ENCODE measurements at regions of chr2 and their contacts with region 1.

Region 1: DNA sequence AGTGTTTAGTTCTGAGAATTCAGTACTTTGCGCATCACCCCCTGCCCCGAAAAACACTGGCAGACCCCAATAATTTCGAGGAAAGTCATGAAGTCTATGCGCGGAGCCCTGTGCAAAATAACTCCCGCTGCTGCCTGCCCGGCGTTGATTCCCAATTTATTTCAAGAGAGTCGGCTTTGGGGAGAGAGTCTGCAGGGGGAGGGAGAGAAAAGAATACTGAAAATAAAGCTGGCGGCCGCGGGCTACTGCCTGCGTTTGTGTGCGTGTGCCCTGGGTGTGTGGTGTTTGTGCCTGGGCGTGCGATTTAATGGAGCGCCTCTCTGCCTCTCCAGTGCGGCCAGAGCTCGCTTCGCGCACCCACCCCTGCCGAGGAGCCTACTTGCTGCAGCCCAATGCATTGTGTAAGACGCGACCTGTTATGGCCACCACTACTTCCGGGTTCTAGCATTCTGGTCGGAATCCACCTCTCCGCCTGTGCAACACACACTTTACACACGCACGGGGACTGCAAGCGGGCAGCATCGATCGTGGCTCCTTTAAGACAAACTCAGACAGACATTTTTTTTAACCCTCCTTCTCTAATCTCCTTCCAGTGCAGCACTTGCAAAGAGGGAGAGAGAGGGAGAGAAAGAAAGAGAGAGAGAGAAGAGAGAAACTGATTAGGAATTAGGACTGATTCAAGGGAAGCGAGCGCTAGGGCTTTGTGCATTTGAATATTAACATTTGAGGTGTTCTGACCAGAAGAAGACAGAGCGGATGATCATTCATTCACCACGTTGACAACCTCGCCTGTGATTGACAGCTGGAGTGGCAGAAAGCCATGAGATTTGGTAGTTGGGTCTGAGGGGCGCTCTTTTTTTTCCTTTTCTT is at the start of gene MEIS1:
- DNase-seq: peak; percentile 89 to 99 (median 97)
- H3K4me3 ChIP-seq: peak within 1 kb of the TSS; percentile 50 to 86 (median 68)
- H3K27ac ChIP-seq: peak within 1 kb of the TSS; percentile 78 to 96 (median 93)
- H3K4me1 ChIP-seq: peaks cover 6 to 19% of the 10 kb centered on the region in 2 donors
- H3K27me3 ChIP-seq: no peaks in the 10 kb centered on the region
- CTCF ChIP-seq: no peak
- POLR2A ChIP-seq: peak; percentile 95 to 100
- total RNA-seq, gene MEIS1: 56.3 to 257 (median 130) TPM

Region 2: DNA sequence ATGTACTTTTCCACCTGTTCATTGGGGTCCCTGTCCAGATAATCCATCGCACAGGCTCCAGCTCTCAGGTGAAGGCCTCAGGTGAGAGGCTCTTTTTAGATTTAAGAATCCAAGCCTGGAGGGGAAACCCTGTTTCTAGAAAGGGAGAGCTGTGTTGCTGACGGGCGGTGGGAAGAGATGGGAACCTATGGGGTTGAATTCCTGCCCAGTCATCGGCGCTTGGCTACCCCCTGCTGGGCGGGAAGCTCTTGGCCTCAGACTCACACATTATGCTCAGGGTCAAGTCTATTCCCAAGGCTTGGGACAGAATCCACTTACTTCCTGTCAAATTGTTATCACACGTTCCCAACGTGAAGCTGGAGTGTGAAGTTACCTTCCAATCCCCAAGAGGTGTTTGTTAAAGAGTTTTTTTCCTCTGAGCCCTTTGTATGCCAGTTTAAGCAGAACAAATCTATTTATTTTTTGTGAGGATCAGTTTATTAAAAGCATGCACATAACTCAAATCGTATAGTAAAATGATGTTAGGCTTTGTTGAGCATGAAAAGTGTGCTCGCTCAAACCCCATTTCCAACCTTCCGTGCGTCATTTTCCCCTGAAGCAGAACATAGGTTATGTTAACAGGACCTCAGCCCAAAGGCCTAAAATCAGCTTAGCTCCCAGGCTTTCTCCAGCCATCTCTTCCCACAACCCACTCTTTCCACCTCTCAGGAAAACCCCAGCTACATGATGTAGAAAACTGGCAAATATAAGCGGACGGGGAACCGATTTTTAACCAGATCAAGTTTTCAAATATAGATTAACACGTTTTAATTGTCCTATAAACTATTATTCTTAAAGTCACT is 780.5 kb after region 1 on chr2:
- intact Hi-C with region 1: loop called in 1 of 2 experiments (anchors 10 kb)
- DNase-seq: peak; percentile 67 to 92 (median 76)
- H3K4me3 ChIP-seq: peak overlapping the region in 1 of 4 donors; percentile 25
- H3K27ac ChIP-seq: peak overlapping the region in 1 of 5 donors; percentile 47
- H3K4me1 ChIP-seq: peaks cover 0 to 4% of the 10 kb centered on the region in 2 donors
- H3K27me3 ChIP-seq: no peaks in the 10 kb centered on the region
- CTCF ChIP-seq: peak; percentile 31 to 72 (median 57)
- POLR2A ChIP-seq: no peak